Sigmoid colon (tissue), 7 donors: ENCODE measurements at regions of chr10 and their contacts with region 1.

Region 1: GRCh38 chr10:89701238-89702120 is at the start of gene KIF20B:
- DNase-seq: peak; percentile 96
- H3K4me3 ChIP-seq: peak within 1 kb of the TSS; percentile 56 to 72 (median 70)
- H3K27ac ChIP-seq: peak within 1 kb of the TSS; percentile 83 to 89 (median 86)
- H3K4me1 ChIP-seq: peaks cover 0 to 19% (median 10%) of the 10 kb centered on the region in 4 donors
- H3K27me3 ChIP-seq: no peaks in the 10 kb centered on the region
- CTCF ChIP-seq: peak in 2 of 4 experiments; percentile 25 to 27
- EP300 ChIP-seq: no peak
- POLR2A ChIP-seq: peak; percentile 26 to 31
- total RNA-seq, gene KIF20B: 1.7 to 2.9 (median 2.7) TPM

Region 2: GRCh38 chr10:89426230-89426868 is 275.1 kb before region 1 on chr10:
- intact Hi-C with region 1: loop called (anchors 5 kb)
- DNase-seq: no peak
- H3K4me3 ChIP-seq: no peak overlapping the region
- H3K27ac ChIP-seq: no peak overlapping the region
- H3K4me1 ChIP-seq: no peaks in the 10 kb centered on the region
- H3K27me3 ChIP-seq: no peaks in the 10 kb centered on the region
- CTCF ChIP-seq: peak; percentile 63 to 85 (median 77)
- EP300 ChIP-seq: no peak
- POLR2A ChIP-seq: no peak

Region 3: DNA sequence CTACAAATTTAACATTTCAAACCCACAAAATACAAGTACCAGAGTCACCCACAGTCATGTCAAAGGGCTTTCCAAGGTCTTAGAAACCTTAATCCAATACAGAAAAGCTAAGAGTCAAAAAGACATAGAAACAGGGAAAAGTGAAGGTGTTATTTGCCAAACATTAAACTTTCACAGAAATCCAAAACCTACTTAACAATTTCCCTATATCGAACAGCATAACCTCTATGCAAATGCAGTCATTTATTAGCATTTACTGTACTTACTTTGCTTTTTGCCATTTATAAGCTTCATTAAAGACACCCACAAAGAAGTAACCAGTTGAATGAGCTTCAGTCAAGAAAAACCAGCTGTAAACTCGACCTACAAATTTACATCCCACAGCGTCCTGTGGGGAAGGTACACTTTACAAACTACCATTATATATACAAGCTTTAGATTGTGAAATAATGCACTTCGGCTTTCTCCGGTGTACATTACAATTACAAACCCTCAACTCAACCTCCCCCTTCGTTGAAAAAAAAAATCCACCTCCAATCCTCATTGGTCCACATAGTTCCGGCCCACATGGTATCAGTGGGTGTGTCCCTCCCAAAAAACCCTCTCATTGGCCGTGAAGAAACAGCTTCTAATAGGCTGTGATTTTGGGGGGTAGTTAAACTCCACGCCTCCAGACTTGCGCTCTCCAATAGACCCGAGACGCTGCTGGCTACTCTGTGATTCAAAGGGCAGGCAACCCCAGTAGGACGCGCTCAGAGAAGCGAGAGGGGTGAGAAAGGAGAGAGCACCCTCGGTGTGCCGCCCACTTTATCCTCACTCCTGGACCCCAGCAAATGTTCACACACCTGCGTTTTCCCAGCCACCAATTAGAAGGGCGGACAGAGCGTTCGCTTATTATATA is 57.8 kb before region 1 on chr10:
- intact Hi-C with region 1: loop called (anchors 1 kb)
- DNase-seq: peak; percentile 85
- H3K4me3 ChIP-seq: peak overlapping the region; percentile 52 to 95 (median 78)
- H3K27ac ChIP-seq: peak overlapping the region; percentile 85 to 96 (median 88)
- H3K4me1 ChIP-seq: peaks cover 0 to 17% (median 13%) of the 10 kb centered on the region in 4 donors
- H3K27me3 ChIP-seq: no peaks in the 10 kb centered on the region
- CTCF ChIP-seq: no peak
- EP300 ChIP-seq: no peak
- POLR2A ChIP-seq: peak; percentile 79 to 90